ENCODE measurements at regions of chrX and their contacts with region 1.

Region 1: GRCh38 chrX:71492231-71493065 is 40.5 kb upstream of the OGT start:
- DNase-seq: peak in 1 of 2 experiments; percentile 25
- H3K4me3 ChIP-seq: peak overlapping the region; percentile 47; the same call in 1 of the 2 replicates
- H3K27ac ChIP-seq: no peak overlapping the region
- H3K4me1 ChIP-seq: no peaks in the 10 kb centered on the region
- H3K27me3 ChIP-seq: no peaks in the 10 kb centered on the region
- CTCF ChIP-seq: no peak

Region 2: GRCh38 chrX:71579136-71579989 is 86.9 kb after region 1 on chrX:
- CTCF ChIA-PET with region 1: interaction called, 10 read pairs
- POLR2A ChIA-PET with region 1: no interaction called
- intact Hi-C with region 1: no loop called
- DNase-seq: no peak
- H3K4me3 ChIP-seq: no peak overlapping the region
- H3K27ac ChIP-seq: no peak overlapping the region
- H3K4me1 ChIP-seq: no peaks in the 10 kb centered on the region
- H3K27me3 ChIP-seq: no peaks in the 10 kb centered on the region
- CTCF ChIP-seq: no peak

Measured in PC-9 (cell line).